Caco-2 (cell line): ENCODE measurements at regions of chr12 and their contacts with region 1.

Region 1: GRCh38 chr12:74365178-74365964 is 172.3 kb upstream of the ATXN7L3B start:
- DNase-seq: peak; percentile 44 to 60
- H3K4me3 ChIP-seq: no peak overlapping the region
- H3K4me3 Mint-ChIP-seq: no peak overlapping the region
- H3K27ac Mint-ChIP-seq: no peak overlapping the region
- H3K4me1 ChIP-seq: no peaks in the 10 kb centered on the region
- H3K4me1 Mint-ChIP-seq: no peaks in the 10 kb centered on the region
- H3K27me3 ChIP-seq: no peaks in the 10 kb centered on the region
- H3K27me3 Mint-ChIP-seq: no peaks in the 10 kb centered on the region
- CTCF ChIP-seq: peak; percentile 34 to 43

Region 2: GRCh38 chr12:73935817-73936216 is 429.6 kb before region 1 on chr12:
- CTCF ChIA-PET with region 1: no interaction called
- POLR2A ChIA-PET with region 1: no interaction called
- intact Hi-C with region 1: loop called (anchors 1 kb)
- DNase-seq: peak in 1 of 2 experiments; percentile 22
- H3K4me3 ChIP-seq: no peak overlapping the region
- H3K4me3 Mint-ChIP-seq: no peak overlapping the region
- H3K27ac Mint-ChIP-seq: no peak overlapping the region
- H3K4me1 ChIP-seq: no peaks in the 10 kb centered on the region
- H3K4me1 Mint-ChIP-seq: no peaks in the 10 kb centered on the region
- H3K27me3 ChIP-seq: no peaks in the 10 kb centered on the region
- H3K27me3 Mint-ChIP-seq: no peaks in the 10 kb centered on the region
- CTCF ChIP-seq: peak; percentile 48 to 54

Region 3: GRCh38 chr12:74227846-74228545 is 137.4 kb before region 1 on chr12:
- CTCF ChIA-PET with region 1: no interaction called
- POLR2A ChIA-PET with region 1: no interaction called
- intact Hi-C with region 1: no loop called
- DNase-seq: no peak
- H3K4me3 ChIP-seq: no peak overlapping the region
- H3K4me3 Mint-ChIP-seq: no peak overlapping the region
- H3K27ac Mint-ChIP-seq: no peak overlapping the region
- H3K4me1 ChIP-seq: no peaks in the 10 kb centered on the region
- H3K4me1 Mint-ChIP-seq: no peaks in the 10 kb centered on the region
- H3K27me3 ChIP-seq: no peaks in the 10 kb centered on the region
- H3K27me3 Mint-ChIP-seq: no peaks in the 10 kb centered on the region
- CTCF ChIP-seq: no peak

Region 4: DNA sequence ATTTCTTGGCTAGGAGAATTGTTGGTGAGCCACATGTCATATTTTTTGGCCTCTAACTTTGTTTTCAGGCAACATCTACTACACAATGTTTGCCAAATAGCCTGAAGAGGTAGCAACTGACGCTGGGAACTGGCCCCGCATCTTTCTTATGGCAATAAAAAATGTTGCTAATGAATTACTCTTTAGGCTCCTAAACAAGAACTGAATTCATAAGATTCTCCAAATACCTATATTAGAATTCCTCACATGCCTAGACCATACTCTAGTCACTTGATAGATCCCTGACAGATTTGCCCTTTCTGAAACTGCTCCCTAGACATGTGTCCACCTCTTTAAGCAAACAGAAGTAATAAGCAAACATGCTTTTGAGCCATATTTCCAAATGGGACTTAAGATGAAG is 36.8 kb before region 1 on chr12:
- CTCF ChIA-PET with region 1: no interaction called
- POLR2A ChIA-PET with region 1: no interaction called
- intact Hi-C with region 1: loop called (anchors 2 kb)
- DNase-seq: peak; percentile 46
- H3K4me3 ChIP-seq: no peak overlapping the region
- H3K4me3 Mint-ChIP-seq: no peak overlapping the region
- H3K27ac Mint-ChIP-seq: no peak overlapping the region
- H3K4me1 ChIP-seq: peaks cover 13% of the 10 kb centered on the region; the same call in 1 of the 2 replicates
- H3K4me1 Mint-ChIP-seq: peaks cover 6% of the 10 kb centered on the region
- H3K27me3 ChIP-seq: no peaks in the 10 kb centered on the region
- H3K27me3 Mint-ChIP-seq: no peaks in the 10 kb centered on the region
- CTCF ChIP-seq: no peak